H1 (cell line): ENCODE measurements at regions of chr1 and their contacts with region 1.

Region 1: DNA sequence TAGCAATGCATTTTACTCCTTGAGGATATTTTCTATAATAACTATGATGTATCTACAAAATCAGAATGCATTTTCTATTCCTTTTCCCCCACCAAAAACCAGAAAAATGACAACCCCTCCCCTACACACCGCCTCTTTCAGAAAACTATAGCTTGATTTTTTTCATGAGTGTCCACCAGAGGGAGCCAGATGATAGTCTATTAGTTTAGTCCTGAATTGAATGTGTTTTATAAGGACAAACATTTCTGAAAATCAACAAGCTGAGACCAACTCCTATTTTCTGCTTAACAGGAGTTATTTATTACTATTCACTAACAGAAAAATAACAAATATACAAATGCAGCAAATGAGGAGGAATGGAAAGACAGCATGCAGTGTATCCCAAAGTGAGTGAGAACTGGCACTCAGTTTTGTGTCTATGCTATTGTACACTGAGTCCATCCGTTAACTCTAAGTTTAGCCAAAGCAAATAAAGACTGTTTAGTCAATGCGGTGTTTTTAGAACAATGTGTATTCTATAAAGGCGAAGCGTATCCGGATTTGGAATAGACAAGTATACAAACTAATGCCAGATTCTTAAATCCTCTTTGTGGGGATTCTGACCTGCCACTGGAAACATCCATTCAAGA is 182.6 kb downstream of the VAV3 start:
- DNase-seq: no peak
- H3K4me3 ChIP-seq: no peak overlapping the region
- H3K27ac ChIP-seq: no peak overlapping the region
- H3K4me1 ChIP-seq: no peaks in the 10 kb centered on the region
- H3K27me3 ChIP-seq: no peaks in the 10 kb centered on the region
- CTCF ChIP-seq: peak in 2 of 3 experiments; percentile 39 to 53; a peak in 2 of 4 replicates
- EP300 ChIP-seq: no peak
- POLR2A ChIP-seq: no peak
- RAD21 ChIP-seq: peak; percentile 84 to 90

Region 2: GRCh38 chr1:107677697-107678096 is 104.6 kb before region 1 on chr1:
- CTCF ChIA-PET with region 1: no interaction called
- POLR2A ChIA-PET with region 1: no interaction called
- DNase-seq: no peak
- H3K4me3 ChIP-seq: no peak overlapping the region
- H3K27ac ChIP-seq: no peak overlapping the region
- H3K4me1 ChIP-seq: peaks cover 0 to 3% (median 0%) of the 10 kb centered on the region in 4 experiments; a peak in 1 of 7 replicates
- H3K27me3 ChIP-seq: no peaks in the 10 kb centered on the region
- CTCF ChIP-seq: no peak
- EP300 ChIP-seq: no peak
- POLR2A ChIP-seq: no peak
- RAD21 ChIP-seq: no peak

Region 3: GRCh38 chr1:107795994-107796393 is 13.7 kb after region 1 on chr1:
- CTCF ChIA-PET with region 1: interaction called, 24 read pairs
- POLR2A ChIA-PET with region 1: no interaction called
- DNase-seq: no peak
- H3K4me3 ChIP-seq: no peak overlapping the region
- H3K27ac ChIP-seq: no peak overlapping the region
- H3K4me1 ChIP-seq: no peaks in the 10 kb centered on the region
- H3K27me3 ChIP-seq: no peaks in the 10 kb centered on the region
- CTCF ChIP-seq: no peak
- EP300 ChIP-seq: no peak
- POLR2A ChIP-seq: no peak
- RAD21 ChIP-seq: no peak

Region 4: DNA sequence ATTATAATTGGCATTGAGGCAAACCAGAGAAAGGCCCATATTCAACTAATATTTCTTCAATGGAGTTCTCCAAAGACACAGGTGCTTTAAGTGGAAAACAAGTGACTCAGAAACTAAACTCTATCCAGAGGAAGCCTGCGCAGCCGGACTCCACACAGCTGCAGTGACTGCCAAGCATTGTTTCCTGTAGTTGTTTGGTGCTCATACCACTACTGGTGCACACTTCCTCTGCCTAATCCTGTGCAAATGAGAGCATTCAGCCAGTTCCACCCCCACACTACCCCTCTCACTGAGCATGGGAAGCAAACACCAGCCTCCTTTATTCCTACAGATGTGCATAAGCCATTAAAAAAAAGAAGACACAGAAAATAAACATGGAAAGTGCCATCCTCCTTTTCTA is 79.7 kb after region 1 on chr1:
- CTCF ChIA-PET with region 1: no interaction called
- POLR2A ChIA-PET with region 1: no interaction called
- DNase-seq: no peak
- H3K4me3 ChIP-seq: no peak overlapping the region
- H3K27ac ChIP-seq: no peak overlapping the region
- H3K4me1 ChIP-seq: peaks cover 2 to 5% (median 4%) of the 10 kb centered on the region in 4 experiments; a peak in 3 of 7 replicates
- H3K27me3 ChIP-seq: no peaks in the 10 kb centered on the region
- CTCF ChIP-seq: no peak
- EP300 ChIP-seq: no peak
- POLR2A ChIP-seq: no peak
- RAD21 ChIP-seq: no peak

Region 5: DNA sequence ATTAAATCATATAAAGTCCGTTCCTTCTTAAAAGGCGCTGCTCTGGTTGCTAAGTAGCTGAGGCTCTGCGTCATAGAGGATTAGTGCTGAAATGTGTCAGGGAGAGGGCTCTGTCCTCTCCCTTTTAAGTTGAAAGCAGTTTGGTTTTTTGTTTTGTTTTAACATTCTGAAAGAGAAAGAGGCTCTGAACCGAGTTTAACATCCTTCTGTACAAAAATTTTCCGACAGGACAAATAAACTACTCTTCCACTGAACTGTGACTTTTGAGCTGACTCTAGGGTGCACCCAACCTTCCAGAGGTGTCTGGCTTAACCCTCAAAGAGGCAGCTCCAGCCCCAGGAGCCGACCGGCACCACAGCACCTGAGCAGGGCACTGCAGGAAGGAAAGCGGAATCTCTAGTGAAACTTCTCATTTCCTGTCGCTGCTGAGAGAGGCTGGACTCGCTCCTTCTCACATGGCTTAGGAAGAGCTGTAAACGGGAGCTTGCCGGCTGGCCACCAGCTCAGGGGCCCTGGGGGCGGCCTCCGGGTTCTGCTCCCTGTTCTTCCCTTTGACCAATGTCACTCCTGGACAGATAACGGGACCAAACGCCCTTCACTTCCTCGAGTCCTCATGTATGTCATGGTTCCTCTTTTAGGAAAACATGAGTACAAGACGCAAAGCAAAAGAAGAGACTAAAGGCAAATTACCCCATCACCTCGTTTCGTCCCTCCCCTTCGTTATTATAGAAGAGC is 181.4 kb after region 1 on chr1:
- CTCF ChIA-PET with region 1: interaction called, 11 read pairs
- POLR2A ChIA-PET with region 1: no interaction called
- DNase-seq: peak in 1 of 2 experiments; percentile 57
- H3K4me3 ChIP-seq: peak overlapping the region; percentile 75 to 88 (median 82)
- H3K27ac ChIP-seq: no peak overlapping the region
- H3K4me1 ChIP-seq: peaks cover 0 to 6% (median 0%) of the 10 kb centered on the region in 4 experiments; a peak in 1 of 7 replicates
- H3K27me3 ChIP-seq: peaks cover 0 to 16% (median 9%) of the 10 kb centered on the region in 4 experiments; a peak in 6 of 7 replicates
- CTCF ChIP-seq: no peak
- EP300 ChIP-seq: no peak
- POLR2A ChIP-seq: peak in 1 of 2 experiments; percentile 36; a peak in 1 of 3 replicates
- RAD21 ChIP-seq: no peak

Region 6: GRCh38 chr1:108114033-108114599 is 331.8 kb after region 1 on chr1:
- CTCF ChIA-PET with region 1: interaction called, 433 read pairs
- POLR2A ChIA-PET with region 1: no interaction called
- DNase-seq: no peak
- H3K4me3 ChIP-seq: no peak overlapping the region
- H3K27ac ChIP-seq: no peak overlapping the region
- H3K4me1 ChIP-seq: no peaks in the 10 kb centered on the region
- H3K27me3 ChIP-seq: no peaks in the 10 kb centered on the region
- CTCF ChIP-seq: no peak
- EP300 ChIP-seq: no peak
- POLR2A ChIP-seq: no peak
- RAD21 ChIP-seq: no peak